ENCODE measurements at regions of chr16 and their contacts with region 1.

Region 1: GRCh38 chr16:17467923-17468540 is 2.7 kb downstream of the XYLT1 start:
- DNase-seq: peak; percentile 63
- H3K4me3 ChIP-seq: peak overlapping the region; percentile 94
- H3K27ac ChIP-seq: peak overlapping the region; percentile 70
- H3K4me1 ChIP-seq: peaks cover 55% of the 10 kb centered on the region
- CTCF ChIP-seq: peak; percentile 89

Region 2: GRCh38 chr16:17117906-17118562 is 350.0 kb before region 1 on chr16:
- CTCF ChIA-PET with region 1: no interaction called
- POLR2A ChIA-PET with region 1: no interaction called
- intact Hi-C with region 1: no loop called
- DNase-seq: no peak
- H3K4me3 ChIP-seq: no peak overlapping the region
- H3K27ac ChIP-seq: no peak overlapping the region
- H3K4me1 ChIP-seq: no peaks in the 10 kb centered on the region
- CTCF ChIP-seq: no peak

Region 3: DNA sequence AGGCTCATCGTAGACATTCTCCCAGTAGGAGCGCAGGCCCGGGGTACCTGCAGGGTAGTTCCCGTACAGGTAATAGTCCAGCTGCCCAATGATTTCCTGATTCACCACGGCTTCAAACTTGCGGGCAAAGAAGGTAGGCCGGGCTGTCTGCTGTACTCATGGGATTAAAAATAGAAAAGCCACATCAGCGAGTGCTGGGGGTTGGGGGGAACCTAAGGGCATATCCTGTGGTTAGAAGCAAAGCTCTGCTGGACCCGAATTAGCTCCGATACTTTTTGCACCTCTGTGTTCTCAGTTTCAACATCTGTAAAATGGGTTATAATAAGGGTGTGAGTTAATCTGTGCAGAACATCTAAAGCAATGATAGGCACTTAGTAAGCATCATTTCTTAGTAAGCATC is 333.4 kb before region 1 on chr16:
- CTCF ChIA-PET with region 1: interaction called, 3 read pairs
- POLR2A ChIA-PET with region 1: interaction called, 4 read pairs
- intact Hi-C with region 1: loop called (anchors 5 kb)
- DNase-seq: peak; percentile 66
- H3K4me3 ChIP-seq: no peak overlapping the region
- H3K27ac ChIP-seq: peak overlapping the region; percentile 42
- H3K4me1 ChIP-seq: peaks cover 40% of the 10 kb centered on the region
- CTCF ChIP-seq: no peak

Region 4: DNA sequence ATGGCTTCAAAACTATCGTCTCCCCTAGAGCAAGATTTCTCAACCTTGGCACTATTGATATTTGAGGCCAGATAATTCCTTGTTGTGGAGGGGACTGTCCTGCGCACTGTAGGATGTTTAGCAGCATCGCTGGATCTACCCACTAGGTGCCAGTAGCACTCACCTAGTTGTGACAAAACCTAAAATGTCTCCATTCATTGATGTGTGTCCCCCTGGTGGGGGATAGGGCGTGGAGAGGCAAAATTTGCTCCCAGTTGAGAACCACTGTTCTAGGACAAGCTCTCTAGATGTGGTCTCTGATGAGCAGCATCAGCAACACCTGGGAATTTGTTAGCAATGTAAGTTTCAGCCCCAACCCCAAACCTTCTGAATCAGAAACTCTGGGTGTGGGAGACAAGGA is 256.2 kb before region 1 on chr16:
- CTCF ChIA-PET with region 1: interaction called, 4 read pairs
- POLR2A ChIA-PET with region 1: no interaction called
- intact Hi-C with region 1: loop called (anchors 1 kb)
- DNase-seq: peak; percentile 77
- H3K4me3 ChIP-seq: no peak overlapping the region
- H3K27ac ChIP-seq: no peak overlapping the region
- H3K4me1 ChIP-seq: peaks cover 10% of the 10 kb centered on the region
- CTCF ChIP-seq: peak; percentile 89

Region 5: GRCh38 chr16:17283016-17283415 is 185.0 kb before region 1 on chr16:
- CTCF ChIA-PET with region 1: no interaction called
- POLR2A ChIA-PET with region 1: interaction called, 7 read pairs
- intact Hi-C with region 1: loop called (anchors 1 kb)
- DNase-seq: no peak
- H3K4me3 ChIP-seq: peak overlapping the region; percentile 48
- H3K27ac ChIP-seq: peak overlapping the region; percentile 60
- H3K4me1 ChIP-seq: peaks cover 83% of the 10 kb centered on the region
- CTCF ChIP-seq: no peak

Region 6: DNA sequence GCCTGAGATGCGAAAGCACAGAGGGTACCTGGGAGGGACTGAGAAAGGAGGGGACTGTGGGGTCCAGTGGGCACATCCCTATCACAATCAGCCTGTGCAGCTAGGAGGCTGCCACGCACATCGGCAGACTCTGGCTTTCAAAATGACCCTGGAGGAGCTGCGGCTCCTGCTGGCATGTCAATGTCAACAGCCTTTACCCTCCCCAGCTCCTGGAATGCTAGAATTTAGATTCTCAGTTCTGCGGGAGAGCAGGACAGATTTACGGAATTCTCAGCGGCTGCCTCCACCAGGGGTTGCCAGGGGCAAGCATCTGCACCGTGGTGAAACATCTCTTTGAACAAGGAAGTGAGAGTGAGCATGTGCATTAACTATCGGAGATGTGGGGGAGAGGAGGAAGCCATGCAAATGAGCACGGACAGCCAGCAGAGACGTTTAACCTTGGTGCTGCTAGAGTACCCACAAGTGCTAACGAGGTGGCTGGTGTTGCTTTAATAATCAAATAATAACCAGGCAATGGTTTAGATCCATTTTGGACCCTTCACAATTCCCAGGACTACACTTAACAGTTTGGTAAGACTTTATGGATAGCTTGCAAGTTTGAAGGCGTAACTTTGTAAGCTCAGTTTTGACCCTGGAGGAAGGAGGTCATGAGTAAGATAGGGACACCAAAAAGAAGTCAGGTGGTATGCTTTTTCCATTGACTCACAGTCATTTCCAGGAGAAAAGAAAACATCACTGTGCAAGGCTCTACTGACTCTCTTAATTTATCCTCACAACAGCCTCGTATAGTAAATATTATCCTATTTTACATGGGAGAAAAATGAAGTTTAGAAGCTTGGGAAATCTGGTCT is 51.3 kb before region 1 on chr16:
- CTCF ChIA-PET with region 1: interaction called, 13 read pairs
- POLR2A ChIA-PET with region 1: interaction called, 16 read pairs
- intact Hi-C with region 1: loop called (anchors 1 kb)
- DNase-seq: peak; percentile 92
- H3K4me3 ChIP-seq: peak overlapping the region; percentile 64
- H3K27ac ChIP-seq: peak overlapping the region; percentile 87
- H3K4me1 ChIP-seq: peaks cover 50% of the 10 kb centered on the region
- CTCF ChIP-seq: peak; percentile 70

Measured in OCI-LY7 (cell line).